ENCODE measurements at regions of chr4 and their contacts with region 1.

Region 1: DNA sequence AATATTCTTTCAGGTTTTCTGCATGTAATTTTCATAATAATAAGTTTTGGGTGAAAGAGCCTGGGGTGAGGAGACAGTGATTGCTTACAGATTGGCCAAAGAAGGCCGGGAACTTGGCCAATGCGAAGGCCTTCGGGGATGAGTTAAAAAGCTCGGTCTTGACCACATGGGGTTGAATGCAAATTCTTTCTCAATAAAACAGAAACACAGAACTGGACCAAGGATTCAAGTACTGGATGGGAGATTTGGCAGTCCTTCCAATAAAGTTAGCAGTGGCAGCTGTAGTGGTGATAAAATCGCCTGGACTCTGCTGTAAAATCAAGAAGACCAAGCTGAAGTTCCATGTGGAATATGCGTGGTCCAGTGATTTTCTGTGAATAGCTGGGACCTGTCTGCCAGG is 282.2 kb upstream of the KLF3 start:
- DNase-seq: no peak
- ATAC-seq: no peak
- H3K4me3 ChIP-seq: no peak overlapping the region
- H3K4me3 Mint-ChIP-seq: no peak overlapping the region
- H3K27ac ChIP-seq: no peak overlapping the region
- H3K27ac Mint-ChIP-seq: peak overlapping the region in 1 of 9 donors; percentile 25
- H3K4me1 ChIP-seq: peaks cover 0 to 16% of the 10 kb centered on the region in 2 donors
- H3K4me1 Mint-ChIP-seq: peaks cover 0 to 45% (median 33%) of the 10 kb centered on the region in 7 donors
- H3K27me3 ChIP-seq: no peaks in the 10 kb centered on the region
- H3K27me3 Mint-ChIP-seq: peaks cover 0 to 14% (median 0%) of the 10 kb centered on the region in 5 donors

Region 2: GRCh38 chr4:38013461-38014366 is 368.1 kb before region 1 on chr4:
- CTCF ChIA-PET with region 1: no interaction called
- POLR2A ChIA-PET with region 1: no interaction called
- intact Hi-C with region 1: no loop called
- DNase-seq: no peak
- ATAC-seq: no peak
- H3K4me3 ChIP-seq: no peak overlapping the region
- H3K4me3 Mint-ChIP-seq: no peak overlapping the region
- H3K27ac ChIP-seq: no peak overlapping the region
- H3K27ac Mint-ChIP-seq: no peak overlapping the region
- H3K4me1 ChIP-seq: no peaks in the 10 kb centered on the region
- H3K4me1 Mint-ChIP-seq: peaks cover 6 to 17% (median 10%) of the 10 kb centered on the region in 7 donors
- H3K27me3 ChIP-seq: no peaks in the 10 kb centered on the region
- H3K27me3 Mint-ChIP-seq: no peaks in the 10 kb centered on the region

Region 3: DNA sequence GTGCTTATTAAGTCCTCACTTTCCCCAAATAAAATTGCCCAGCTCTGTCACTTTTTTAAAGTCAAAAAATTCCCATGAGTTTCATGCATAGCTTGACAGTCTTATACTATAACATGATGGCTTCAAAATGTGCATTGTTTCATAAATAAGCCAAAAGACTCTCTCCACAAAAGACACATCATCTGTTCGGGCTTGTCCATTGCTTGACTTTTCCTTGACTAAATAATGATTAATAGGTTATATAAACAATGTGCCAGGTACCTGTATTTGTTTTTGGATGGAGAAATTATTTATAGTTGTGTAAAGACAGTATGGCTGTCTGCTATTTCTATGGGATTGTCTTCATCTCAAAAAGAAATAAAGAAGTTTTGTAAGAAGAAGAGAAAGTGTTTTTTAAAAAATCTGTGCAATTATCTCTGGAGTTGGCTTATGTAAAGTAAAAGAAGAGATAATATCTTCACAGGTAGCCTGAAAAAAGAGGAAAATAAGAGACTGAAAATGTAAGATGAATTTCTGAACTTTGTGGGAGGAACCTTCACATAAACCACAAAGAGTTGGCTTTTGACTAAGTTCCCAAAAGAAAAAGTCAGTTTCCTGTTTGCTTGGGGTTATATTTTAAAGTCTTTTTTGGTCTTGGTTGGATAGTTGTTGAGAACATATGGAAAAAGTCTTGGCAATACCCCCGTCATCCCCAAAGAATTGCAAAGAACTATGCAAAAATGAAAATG is 46.8 kb before region 1 on chr4:
- CTCF ChIA-PET with region 1: no interaction called
- POLR2A ChIA-PET with region 1: no interaction called
- intact Hi-C with region 1: loop called in 1 of 2 experiments (anchors 5 kb)
- DNase-seq: no peak
- ATAC-seq: no peak
- H3K4me3 ChIP-seq: no peak overlapping the region
- H3K4me3 Mint-ChIP-seq: peak overlapping the region; percentile 4 to 82 (median 66)
- H3K27ac ChIP-seq: no peak overlapping the region
- H3K27ac Mint-ChIP-seq: peak overlapping the region; percentile 1 to 92 (median 75)
- H3K4me1 ChIP-seq: peaks cover 6 to 39% of the 10 kb centered on the region in 2 donors
- H3K4me1 Mint-ChIP-seq: peaks cover 25 to 71% (median 46%) of the 10 kb centered on the region in 7 donors
- H3K27me3 ChIP-seq: no peaks in the 10 kb centered on the region
- H3K27me3 Mint-ChIP-seq: peaks cover 0 to 60% (median 0%) of the 10 kb centered on the region in 5 donors

Region 4: GRCh38 chr4:38867478-38868058 is 485.8 kb after region 1 on chr4 and contains the start of gene FAM114A1:
- CTCF ChIA-PET with region 1: no interaction called
- POLR2A ChIA-PET with region 1: no interaction called
- intact Hi-C with region 1: no loop called
- DNase-seq: peak in 3 of 9 donors; percentile 10 to 61 (median 31)
- ATAC-seq: peak; percentile 91
- H3K4me3 ChIP-seq: peak within 1 kb of the TSS; percentile 14
- H3K4me3 Mint-ChIP-seq: peak within 1 kb of the TSS; percentile 68 to 88 (median 81)
- H3K27ac ChIP-seq: no peak within 1 kb of the TSS
- H3K27ac Mint-ChIP-seq: peak within 1 kb of the TSS in 4 of 9 donors; percentile 8 to 67 (median 30)
- H3K4me1 ChIP-seq: no peaks in the 10 kb centered on the region
- H3K4me1 Mint-ChIP-seq: peaks cover 11 to 24% (median 21%) of the 10 kb centered on the region in 7 donors
- H3K27me3 ChIP-seq: no peaks in the 10 kb centered on the region
- H3K27me3 Mint-ChIP-seq: peaks cover 0 to 25% (median 17%) of the 10 kb centered on the region in 5 donors
- total RNA-seq, gene FAM114A1: 0.56 to 0.83 (median 0.64) TPM in 3 of 5 experiments, not detected in the others